GM10248 (cell line): ENCODE measurements at regions of chr5 and their contacts with region 1.

Region 1: GRCh38 chr5:31626156-31626555 is 12.8 kb upstream of the PDZD2 start:
- DNase-seq: no peak
- CTCF ChIP-seq: no peak

Region 2: GRCh38 chr5:31638748-31639418 is 12.7 kb after region 1 on chr5 and contains the start of gene PDZD2:
- CTCF ChIA-PET with region 1: interaction called, 29 read pairs
- POLR2A ChIA-PET with region 1: no interaction called
- DNase-seq: peak; percentile 80
- CTCF ChIP-seq: peak; percentile 47